ENCODE measurements at regions of chr19 and their contacts with region 1.

Region 1: DNA sequence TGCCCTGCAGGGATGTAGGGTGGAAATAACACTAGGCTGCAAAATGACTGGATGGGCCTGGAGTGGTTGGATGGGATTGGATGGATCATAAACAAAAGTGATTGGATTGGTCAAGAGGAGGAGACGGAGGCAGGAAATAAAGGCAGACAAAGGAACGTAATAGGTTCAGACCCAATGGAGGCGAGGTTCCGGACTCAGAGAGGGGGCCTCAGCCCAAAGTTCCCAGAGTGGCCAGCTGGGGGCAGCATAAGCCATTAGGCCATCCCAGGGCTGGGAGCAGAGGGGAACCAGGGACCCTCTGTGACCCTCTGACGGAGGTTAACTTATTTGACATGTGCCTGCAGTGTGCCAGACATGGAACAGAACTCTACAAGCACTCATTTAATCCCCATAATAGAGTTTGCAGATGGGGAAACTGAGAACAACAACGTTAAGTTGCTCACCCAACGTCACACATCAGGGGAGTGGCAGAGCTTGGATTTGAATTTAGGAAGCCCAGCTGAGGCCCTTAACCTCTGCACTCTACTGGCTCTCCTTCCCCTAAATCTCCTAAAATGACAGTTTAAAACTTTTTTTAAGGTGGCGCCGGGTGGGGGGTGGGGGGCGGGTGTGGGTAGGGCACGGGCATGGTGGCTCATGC is 15.3 kb upstream of the MAP1S start:
- DNase-seq: peak in 1 of 2 donors; percentile 74
- ATAC-seq: peak; percentile 80

Region 2: DNA sequence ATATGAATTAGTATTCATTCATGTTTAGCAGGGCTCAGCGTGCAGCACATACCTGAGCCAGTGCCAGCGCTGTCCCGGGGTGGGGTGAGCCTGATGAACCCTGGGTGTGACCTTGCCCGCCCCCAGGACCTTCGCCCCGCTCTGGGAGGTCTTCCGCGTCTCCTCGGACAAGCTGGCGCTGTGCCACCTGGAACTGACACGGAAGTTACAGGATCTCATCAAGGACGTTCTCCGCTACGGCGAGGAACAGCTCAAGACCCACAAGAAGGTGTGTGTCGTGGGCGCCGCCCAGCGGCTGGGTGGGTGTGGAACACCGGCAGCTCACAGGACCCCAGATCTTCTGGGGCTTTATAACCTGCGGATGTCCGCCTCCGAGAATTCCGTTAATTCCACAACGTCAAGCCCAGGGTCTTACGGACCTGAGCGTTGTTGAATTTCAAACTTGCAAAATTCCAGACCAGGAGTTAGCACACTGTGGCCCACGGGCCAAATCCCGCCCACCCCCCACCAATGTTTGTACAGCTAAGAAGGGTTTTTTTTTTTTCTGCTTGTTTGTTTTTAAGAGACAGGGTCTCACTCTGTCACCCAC is 62.7 kb after region 1 on chr19:
- intact Hi-C with region 1: loop called in 1 of 2 experiments (anchors 10 kb)
- DNase-seq: peak; percentile 97 to 98
- ATAC-seq: peak; percentile 89

Region 3: DNA sequence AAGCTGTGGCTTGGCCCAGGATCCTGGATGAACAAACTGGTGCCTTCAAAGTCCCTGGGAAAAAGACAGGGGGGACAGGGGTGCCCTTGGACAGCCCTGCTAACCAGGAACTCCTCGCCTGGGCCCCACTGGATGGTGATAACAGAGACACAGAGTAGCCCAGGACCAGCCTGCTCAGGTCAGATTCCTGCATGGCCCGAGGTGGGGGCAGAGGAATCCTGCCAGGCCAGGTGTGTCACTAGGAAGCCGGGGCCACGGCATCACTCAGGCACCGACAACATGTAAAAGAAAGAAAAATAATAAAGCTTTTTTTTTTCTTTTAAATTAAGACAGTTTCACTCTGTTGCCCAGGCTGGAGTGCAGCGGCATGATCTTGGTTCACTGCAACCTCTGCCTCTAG is 150.1 kb after region 1 on chr19:
- intact Hi-C with region 1: loop called in 1 of 2 experiments (anchors 5 kb)
- DNase-seq: no peak
- ATAC-seq: no peak

Measured in left colon (tissue), 2 donors.